ENCODE measurements at regions of chr11 and their contacts with region 1.

Region 1: GRCh38 chr11:66842896-66843775 is at the start of gene RCE1:
- DNase-seq: peak; percentile 92 to 96
- ATAC-seq: peak; percentile 96
- H3K4me3 ChIP-seq: peak within 1 kb of the TSS; percentile 87 to 92
- H3K27ac ChIP-seq: peak within 1 kb of the TSS; percentile 84 to 92
- H3K4me1 ChIP-seq: no peaks in the 10 kb centered on the region
- H3K27me3 ChIP-seq: no peaks in the 10 kb centered on the region
- total RNA-seq, gene RCE1: 11.7 to 14.6 TPM

Region 2: GRCh38 chr11:66970808-66971442 is 127.8 kb after region 1 on chr11:
- intact Hi-C with region 1: loop called in 1 of 2 experiments (anchors 5 kb)
- DNase-seq: peak; percentile 78 to 82
- ATAC-seq: peak; percentile 93
- H3K4me3 ChIP-seq: no peak overlapping the region
- H3K27ac ChIP-seq: peak overlapping the region; percentile 86 to 97
- H3K4me1 ChIP-seq: peaks cover 0 to 2% of the 10 kb centered on the region in 2 donors
- H3K27me3 ChIP-seq: no peaks in the 10 kb centered on the region

Measured in aorta (tissue), 5 donors.